ENCODE measurements at regions of chr12 and their contacts with region 1.

Region 1: GRCh38 chr12:106629797-106630659 is 47.2 kb downstream of the RFX4 start:
- DNase-seq: no peak
- H3K4me3 ChIP-seq: no peak overlapping the region
- H3K27ac ChIP-seq: no peak overlapping the region
- H3K4me1 ChIP-seq: no peaks in the 10 kb centered on the region
- H3K27me3 ChIP-seq: peaks cover 3% of the 10 kb centered on the region
- CTCF ChIP-seq: no peak
- EP300 ChIP-seq: no peak
- POLR2A ChIP-seq: no peak

Region 2: DNA sequence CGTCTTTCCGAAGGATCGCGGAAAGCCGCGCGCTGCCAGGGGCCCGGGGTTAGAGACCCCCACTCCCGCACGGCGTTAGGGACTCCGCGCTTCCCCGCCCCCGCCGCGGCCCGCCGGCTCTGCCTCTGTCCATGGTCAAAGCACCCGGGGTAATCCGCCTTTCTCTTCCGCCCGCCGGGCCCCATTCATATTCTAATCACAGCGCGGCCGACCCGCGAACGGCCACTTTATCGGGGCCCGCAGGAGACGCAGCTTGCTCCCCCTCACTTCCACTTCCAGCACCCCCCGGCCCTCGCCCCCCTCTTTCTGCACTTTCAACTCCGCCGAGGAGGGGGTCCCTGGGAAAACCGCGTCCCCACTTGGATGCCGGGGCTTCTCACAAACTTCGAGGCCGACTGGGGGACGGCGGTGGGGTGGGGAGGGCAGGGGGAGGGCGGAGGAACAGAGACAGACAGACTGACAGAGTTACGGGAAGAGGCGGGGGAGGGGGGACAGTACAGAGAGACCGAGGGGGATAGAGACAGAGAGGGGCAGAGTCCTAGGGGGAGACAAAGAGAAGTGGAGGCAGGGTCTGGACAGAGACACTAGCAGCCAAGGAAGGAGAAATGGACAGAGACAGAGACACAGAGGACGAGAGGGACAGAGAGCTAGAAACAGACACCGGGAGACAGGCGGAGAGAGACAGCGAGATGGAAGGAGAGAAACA is 48.3 kb before region 1 on chr12:
- in situ Hi-C with region 1: no loop called
- intact Hi-C with region 1: loop called (anchors 10 kb)
- DNase-seq: no peak
- H3K4me3 ChIP-seq: peak overlapping the region in 1 of 4 donors; percentile 49
- H3K27ac ChIP-seq: no peak overlapping the region
- H3K4me1 ChIP-seq: peaks cover 4 to 55% (median 44%) of the 10 kb centered on the region in 4 donors
- H3K27me3 ChIP-seq: peaks cover 100% of the 10 kb centered on the region
- CTCF ChIP-seq: no peak
- EP300 ChIP-seq: no peak
- POLR2A ChIP-seq: no peak

Region 3: GRCh38 chr12:107225635-107226034 is 595.6 kb after region 1 on chr12:
- in situ Hi-C with region 1: no loop called
- intact Hi-C with region 1: no loop called
- DNase-seq: no peak
- H3K4me3 ChIP-seq: no peak overlapping the region
- H3K27ac ChIP-seq: no peak overlapping the region
- H3K4me1 ChIP-seq: no peaks in the 10 kb centered on the region
- H3K27me3 ChIP-seq: peaks cover under 1% of the 10 kb centered on the region
- CTCF ChIP-seq: no peak
- EP300 ChIP-seq: no peak
- POLR2A ChIP-seq: no peak

Measured in transverse colon (tissue), 4 donors.